PC-3 (cell line): ENCODE measurements at regions of chr2 and their contacts with region 1.

Region 1: GRCh38 chr2:174383796-174384195 is 11.7 kb upstream of the SCRN3 start:
- DNase-seq: no peak
- ATAC-seq: no peak
- H3K4me3 ChIP-seq: no peak overlapping the region
- H3K27ac ChIP-seq: no peak overlapping the region
- H3K4me1 ChIP-seq: no peaks in the 10 kb centered on the region
- H3K27me3 ChIP-seq: no peaks in the 10 kb centered on the region
- CTCF ChIP-seq: no peak

Region 2: GRCh38 chr2:173064151-173064805 is 1319.5 kb before region 1 on chr2:
- CTCF ChIA-PET with region 1: no interaction called
- POLR2A ChIA-PET with region 1: no interaction called
- intact Hi-C with region 1: no loop called
- DNase-seq: no peak
- ATAC-seq: no peak
- H3K4me3 ChIP-seq: no peak overlapping the region
- H3K27ac ChIP-seq: no peak overlapping the region
- H3K4me1 ChIP-seq: no peaks in the 10 kb centered on the region
- H3K27me3 ChIP-seq: no peaks in the 10 kb centered on the region
- CTCF ChIP-seq: no peak

Region 3: GRCh38 chr2:174791020-174791419 is 407.2 kb after region 1 on chr2:
- CTCF ChIA-PET with region 1: no interaction called
- POLR2A ChIA-PET with region 1: interaction called, 17 read pairs
- intact Hi-C with region 1: no loop called
- DNase-seq: no peak
- ATAC-seq: no peak
- H3K4me3 ChIP-seq: no peak overlapping the region
- H3K27ac ChIP-seq: no peak overlapping the region
- H3K4me1 ChIP-seq: no peaks in the 10 kb centered on the region
- H3K27me3 ChIP-seq: no peaks in the 10 kb centered on the region
- CTCF ChIP-seq: no peak